B cell (primary cell): ENCODE measurements at regions of chr1 and their contacts with region 1.

Region 1: DNA sequence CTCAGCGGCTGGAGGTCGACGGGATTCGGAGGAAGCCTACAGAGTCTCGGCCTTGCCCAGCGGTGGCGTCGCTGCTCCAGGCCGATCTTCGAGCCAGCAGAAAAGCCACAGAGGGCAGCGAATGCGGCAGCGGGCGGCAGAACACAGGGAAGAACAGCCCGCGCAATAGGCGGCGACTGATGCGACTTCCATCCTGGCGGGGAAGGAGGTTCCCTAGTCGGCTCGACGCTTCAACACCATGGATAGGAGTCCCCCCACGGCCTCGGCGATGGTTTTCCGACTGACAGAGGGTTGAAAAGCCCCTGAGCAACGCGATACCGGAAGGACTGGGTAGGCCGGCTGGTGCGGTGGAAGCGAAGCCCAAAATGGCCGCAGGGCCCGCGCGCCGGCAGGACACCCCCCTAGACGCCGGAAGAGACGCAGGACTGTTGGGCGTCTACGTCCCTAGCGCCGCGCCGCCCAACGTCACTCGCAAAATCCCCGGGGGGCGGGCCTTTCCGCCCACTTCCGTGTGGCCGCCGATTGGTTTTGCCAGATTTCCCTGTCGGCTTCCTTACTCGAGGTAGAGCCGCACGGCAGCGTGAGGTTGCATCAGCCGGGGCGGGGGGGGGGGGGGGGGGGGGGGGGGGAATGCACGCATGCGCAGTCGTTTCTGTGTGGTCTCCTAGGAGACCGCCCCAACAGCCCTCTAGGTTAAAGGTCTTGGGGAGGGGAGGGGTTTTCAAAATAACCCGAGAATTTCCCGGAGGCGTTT is at the start of gene PPP1R15B:
- DNase-seq: peak; percentile 100
- ATAC-seq: peak; percentile 91
- H3K4me3 ChIP-seq: peak within 1 kb of the TSS; percentile 80 to 100 (median 92)
- H3K4me3 Mint-ChIP-seq: peak within 1 kb of the TSS; percentile 99
- H3K27ac ChIP-seq: peak within 1 kb of the TSS; percentile 98 to 99
- H3K27ac Mint-ChIP-seq: peak within 1 kb of the TSS; percentile 99
- H3K4me1 ChIP-seq: peaks cover 8 to 24% of the 10 kb centered on the region in 2 donors
- H3K4me1 Mint-ChIP-seq: peaks cover 36% of the 10 kb centered on the region
- H3K27me3 ChIP-seq: no peaks in the 10 kb centered on the region
- H3K27me3 Mint-ChIP-seq: no peaks in the 10 kb centered on the region
- CTCF ChIP-seq: no peak
- total RNA-seq, gene PPP1R15B: 65.7 and 68.0 TPM in 2 replicates

Region 2: DNA sequence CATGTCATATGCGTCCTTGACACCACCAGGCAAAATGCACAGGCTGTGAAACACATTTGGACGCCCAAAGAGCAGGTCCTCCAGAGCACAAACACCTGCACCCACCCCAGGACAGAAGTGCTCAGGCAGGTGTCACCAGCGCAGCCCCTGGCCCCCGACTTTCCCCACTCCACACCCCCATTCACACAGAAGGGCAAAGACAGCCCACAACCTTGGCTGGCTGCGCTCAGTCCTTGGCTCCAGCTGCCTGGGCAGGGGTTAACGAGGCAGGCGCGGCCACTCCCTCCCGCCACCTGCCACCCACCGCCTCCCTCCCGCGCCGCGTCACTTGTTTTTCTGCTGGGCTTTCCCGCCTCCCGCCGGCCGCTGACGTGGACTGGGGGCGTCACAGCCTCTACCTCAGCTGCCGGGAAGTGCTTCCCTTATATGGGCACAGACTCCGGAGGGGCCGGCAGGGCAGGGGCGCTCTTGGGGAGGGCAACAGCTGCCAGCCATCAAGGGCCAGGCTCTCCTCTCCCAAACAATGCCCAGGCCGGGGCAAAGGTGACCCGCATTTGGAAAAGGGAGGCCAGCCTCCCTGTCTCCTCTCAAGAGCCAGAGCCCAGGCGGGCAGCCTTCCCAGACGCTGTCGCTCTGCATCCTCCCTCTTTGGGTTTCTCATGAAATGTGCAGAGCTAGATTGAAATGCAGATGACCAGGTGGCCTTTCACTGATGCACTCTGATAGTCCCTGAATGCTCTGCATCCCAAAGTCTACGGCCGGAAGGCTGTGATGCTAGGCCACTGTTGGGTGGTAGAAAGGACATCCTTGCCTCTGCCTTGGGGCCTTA is 1121.2 kb before region 1 on chr1:
- CTCF ChIA-PET with region 1: no interaction called
- POLR2A ChIA-PET with region 1: no interaction called
- intact Hi-C with region 1: loop called (anchors 5 kb)
- DNase-seq: peak; percentile 98
- ATAC-seq: peak; percentile 40
- H3K4me3 ChIP-seq: peak overlapping the region; percentile 45 to 66 (median 56)
- H3K4me3 Mint-ChIP-seq: peak overlapping the region; percentile 88
- H3K27ac ChIP-seq: peak overlapping the region; percentile 99 to 100
- H3K27ac Mint-ChIP-seq: peak overlapping the region; percentile 95
- H3K4me1 ChIP-seq: peaks cover 70 to 90% of the 10 kb centered on the region in 2 donors
- H3K4me1 Mint-ChIP-seq: peaks cover 87% of the 10 kb centered on the region
- H3K27me3 ChIP-seq: no peaks in the 10 kb centered on the region
- H3K27me3 Mint-ChIP-seq: no peaks in the 10 kb centered on the region
- CTCF ChIP-seq: no peak

Region 3: DNA sequence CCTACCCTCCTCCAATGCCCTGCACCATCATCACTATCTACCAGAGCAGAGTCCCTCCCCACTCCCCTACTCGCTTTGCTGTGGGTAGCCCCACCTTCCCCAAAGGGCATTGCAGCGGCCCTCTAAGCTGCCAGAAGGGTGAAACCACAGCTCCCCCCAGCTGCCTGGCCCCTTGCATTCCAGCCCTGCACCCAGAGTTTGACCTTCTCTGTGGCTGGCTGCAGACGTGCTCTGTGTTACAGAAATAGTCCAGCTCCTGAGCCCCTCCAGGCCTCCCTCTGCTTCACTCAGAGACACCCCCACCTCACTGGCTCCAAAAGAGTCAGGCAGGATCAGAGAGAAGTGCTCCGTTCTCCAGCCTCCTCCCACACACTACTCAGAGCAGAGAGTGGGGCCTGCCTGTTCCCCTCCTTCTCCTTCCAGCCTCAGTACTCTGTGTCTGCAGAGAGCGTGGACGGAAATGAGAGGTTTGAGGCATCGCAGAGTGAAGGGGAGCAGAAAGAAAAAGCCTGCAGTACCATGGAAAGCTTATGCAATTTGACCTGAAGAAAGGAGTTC is 115.1 kb before region 1 on chr1:
- CTCF ChIA-PET with region 1: no interaction called
- POLR2A ChIA-PET with region 1: no interaction called
- intact Hi-C with region 1: no loop called
- DNase-seq: no peak
- ATAC-seq: no peak
- H3K4me3 ChIP-seq: no peak overlapping the region
- H3K4me3 Mint-ChIP-seq: no peak overlapping the region
- H3K27ac ChIP-seq: no peak overlapping the region
- H3K27ac Mint-ChIP-seq: no peak overlapping the region
- H3K4me1 ChIP-seq: no peaks in the 10 kb centered on the region
- H3K4me1 Mint-ChIP-seq: no peaks in the 10 kb centered on the region
- H3K27me3 ChIP-seq: peaks cover 0 to 3% (median 0%) of the 10 kb centered on the region in 4 experiments
- H3K27me3 Mint-ChIP-seq: peaks cover 59% of the 10 kb centered on the region
- CTCF ChIP-seq: no peak

Region 4: DNA sequence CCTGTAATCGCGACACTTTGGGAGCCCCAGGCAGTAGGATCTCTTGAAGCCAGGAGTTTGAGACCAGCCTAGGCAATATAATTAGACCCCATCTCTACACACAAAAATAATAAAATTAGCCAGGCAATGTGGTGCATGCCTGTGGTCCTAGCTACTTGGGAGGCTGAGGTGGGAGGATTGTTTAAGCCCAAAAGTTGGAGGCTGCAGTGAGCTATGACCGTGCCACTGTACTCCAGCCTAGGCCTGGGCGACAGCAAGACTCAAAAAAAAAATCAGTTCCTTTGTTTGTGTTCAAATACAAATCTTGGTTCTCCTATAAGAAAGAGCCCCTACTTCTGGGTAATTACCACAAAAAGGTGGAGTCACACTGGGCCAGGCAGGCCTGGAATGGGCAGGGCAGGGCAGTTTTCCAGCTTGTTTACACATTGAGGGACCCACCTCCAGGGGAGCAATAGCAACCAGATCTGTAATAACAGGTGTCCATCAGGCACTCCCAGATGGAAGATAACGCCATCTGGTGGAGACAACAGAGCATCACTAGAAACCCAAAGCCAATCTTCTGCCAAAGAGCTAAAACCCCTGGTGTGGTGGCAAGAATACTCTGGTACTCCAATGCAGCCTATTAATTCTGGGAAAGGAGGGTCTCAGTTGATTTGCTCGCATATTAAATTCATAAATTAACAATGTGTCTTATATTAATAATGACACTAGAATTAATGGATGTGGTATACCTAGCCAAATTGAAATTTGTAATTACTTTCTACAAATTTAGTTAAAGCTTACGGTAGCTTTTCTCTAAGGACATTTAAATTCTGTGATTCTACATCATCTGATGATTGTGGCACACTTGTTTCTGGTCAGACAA is 13.2 kb before region 1 on chr1:
- CTCF ChIA-PET with region 1: interaction called, 46 read pairs
- POLR2A ChIA-PET with region 1: interaction called, 3 read pairs
- intact Hi-C with region 1: no loop called
- DNase-seq: peak; percentile 81
- ATAC-seq: peak; percentile 95
- H3K4me3 ChIP-seq: no peak overlapping the region
- H3K4me3 Mint-ChIP-seq: no peak overlapping the region
- H3K27ac ChIP-seq: peak overlapping the region; percentile 46 to 59
- H3K27ac Mint-ChIP-seq: peak overlapping the region; percentile 84
- H3K4me1 ChIP-seq: peaks cover 0 to 4% of the 10 kb centered on the region in 2 donors
- H3K4me1 Mint-ChIP-seq: peaks cover 2% of the 10 kb centered on the region
- H3K27me3 ChIP-seq: no peaks in the 10 kb centered on the region
- H3K27me3 Mint-ChIP-seq: no peaks in the 10 kb centered on the region
- CTCF ChIP-seq: peak; percentile 85

Region 5: GRCh38 chr1:204431310-204432165 is 19.9 kb after region 1 on chr1:
- CTCF ChIA-PET with region 1: interaction called, 19 read pairs
- POLR2A ChIA-PET with region 1: no interaction called
- intact Hi-C with region 1: no loop called
- DNase-seq: peak; percentile 84
- ATAC-seq: peak; percentile 77
- H3K4me3 ChIP-seq: no peak overlapping the region
- H3K4me3 Mint-ChIP-seq: no peak overlapping the region
- H3K27ac ChIP-seq: no peak overlapping the region
- H3K27ac Mint-ChIP-seq: peak overlapping the region; percentile 1
- H3K4me1 ChIP-seq: no peaks in the 10 kb centered on the region
- H3K4me1 Mint-ChIP-seq: no peaks in the 10 kb centered on the region
- H3K27me3 ChIP-seq: no peaks in the 10 kb centered on the region
- H3K27me3 Mint-ChIP-seq: no peaks in the 10 kb centered on the region
- CTCF ChIP-seq: peak; percentile 93

Region 6: GRCh38 chr1:204516180-204516879 is 104.7 kb after region 1 on chr1 and contains the start of gene MDM4:
- CTCF ChIA-PET with region 1: no interaction called
- POLR2A ChIA-PET with region 1: interaction called, 4 read pairs
- intact Hi-C with region 1: loop called (anchors 2 kb)
- DNase-seq: peak; percentile 97
- ATAC-seq: peak; percentile 78
- H3K4me3 ChIP-seq: peak within 1 kb of the TSS; percentile 75 to 96 (median 91)
- H3K4me3 Mint-ChIP-seq: no peak within 1 kb of the TSS
- H3K27ac ChIP-seq: peak within 1 kb of the TSS; percentile 95 to 97
- H3K27ac Mint-ChIP-seq: no peak within 1 kb of the TSS
- H3K4me1 ChIP-seq: peaks cover 83 to 92% of the 10 kb centered on the region in 2 donors
- H3K4me1 Mint-ChIP-seq: peaks cover 68% of the 10 kb centered on the region
- H3K27me3 ChIP-seq: no peaks in the 10 kb centered on the region
- H3K27me3 Mint-ChIP-seq: no peaks in the 10 kb centered on the region
- CTCF ChIP-seq: no peak
- total RNA-seq, gene MDM4: 374 and 378 TPM in 2 replicates